Transverse colon (tissue), 4 donors: ENCODE measurements at regions of chrX and their contacts with region 1.

Region 1: DNA sequence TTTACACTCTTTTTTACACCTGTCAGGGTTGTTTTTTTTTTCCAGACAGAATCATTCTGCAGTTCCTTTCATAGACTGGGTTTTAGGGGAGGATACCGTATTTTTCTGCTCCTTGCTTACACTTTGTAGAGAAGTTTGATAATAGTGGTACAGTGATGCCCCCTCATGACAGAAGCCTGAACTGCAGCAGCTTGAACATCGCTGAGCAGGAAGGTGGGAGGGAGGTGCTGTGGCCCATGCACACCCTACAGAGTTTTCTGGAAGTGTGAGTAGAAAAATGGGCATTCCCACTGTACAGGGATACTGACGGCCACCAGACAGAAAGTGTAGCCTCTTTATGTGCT is 54.5 kb downstream of the RAB40A start:
- DNase-seq: peak; percentile 80
- H3K4me3 ChIP-seq: peak overlapping the region in 1 of 4 donors; percentile 27
- H3K27ac ChIP-seq: no peak overlapping the region
- H3K4me1 ChIP-seq: peaks cover 0 to 3% (median 0%) of the 10 kb centered on the region in 4 donors
- H3K27me3 ChIP-seq: no peaks in the 10 kb centered on the region
- CTCF ChIP-seq: peak; percentile 56 to 71 (median 69)
- EP300 ChIP-seq: no peak
- POLR2A ChIP-seq: no peak

Region 2: DNA sequence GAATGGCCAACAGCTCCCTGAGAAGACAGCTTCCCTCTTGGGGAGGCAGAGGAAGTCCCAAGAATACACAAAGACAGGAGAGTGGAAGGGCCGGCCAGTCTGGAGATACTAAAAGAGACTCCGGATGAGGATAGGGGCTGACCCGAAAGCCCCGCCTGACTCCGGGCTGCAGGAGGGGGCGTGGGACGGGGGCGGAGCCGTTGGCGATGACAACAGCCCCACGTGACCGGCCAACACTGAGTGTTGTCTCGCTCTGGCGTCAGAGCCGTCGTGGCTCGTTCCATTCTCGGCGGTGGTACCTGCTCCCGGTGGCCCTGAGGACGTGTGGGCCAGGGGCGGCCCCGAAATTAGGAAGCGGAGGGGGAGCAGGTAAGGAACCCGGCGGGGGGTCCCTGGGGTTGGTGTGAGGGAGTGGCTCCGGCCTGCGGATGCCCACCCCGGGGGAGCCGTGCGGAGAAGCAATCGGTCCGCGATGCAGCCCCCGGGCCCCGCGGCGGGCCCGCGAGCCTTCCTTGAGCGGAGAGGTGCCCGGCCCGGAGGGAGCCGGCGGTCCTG is 249.8 kb before region 1 on chrX and contains the start of gene BEX4:
- in situ Hi-C with region 1: loop called in 3 of 4 experiments (anchors 10 to 25 kb)
- intact Hi-C with region 1: no loop called
- DNase-seq: peak; percentile 88
- H3K4me3 ChIP-seq: peak within 1 kb of the TSS; percentile 68 to 87 (median 80)
- H3K27ac ChIP-seq: peak within 1 kb of the TSS; percentile 84 to 93 (median 90)
- H3K4me1 ChIP-seq: no peaks in the 10 kb centered on the region
- H3K27me3 ChIP-seq: no peaks in the 10 kb centered on the region
- CTCF ChIP-seq: no peak
- EP300 ChIP-seq: no peak
- POLR2A ChIP-seq: peak; percentile 81
- total RNA-seq, gene BEX4: 4.4 to 27.5 (median 16.2) TPM

Region 3: DNA sequence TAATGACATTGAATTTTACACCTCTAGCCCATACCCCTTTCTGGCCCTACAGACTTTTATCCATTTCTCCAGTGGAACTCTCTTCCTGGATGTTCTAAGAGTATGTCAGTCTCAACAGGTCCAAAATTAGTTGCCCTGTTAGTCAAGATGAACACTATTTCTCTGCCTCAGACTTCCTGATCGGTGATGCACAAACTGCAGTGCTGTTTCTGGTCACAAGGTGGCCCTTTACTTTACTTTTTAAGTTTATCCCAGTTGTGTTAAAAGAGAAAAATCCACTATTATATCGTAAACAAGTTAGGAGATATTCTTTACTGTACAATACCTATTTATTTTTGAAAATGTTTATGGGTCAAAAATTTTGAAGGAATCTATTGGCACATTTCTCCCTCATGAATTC is 121.6 kb before region 1 on chrX:
- in situ Hi-C with region 1: loop called in 2 of 4 experiments (anchors 10 to 25 kb)
- intact Hi-C with region 1: loop called (anchors 10 kb)
- DNase-seq: peak; percentile 52
- H3K4me3 ChIP-seq: no peak overlapping the region
- H3K27ac ChIP-seq: no peak overlapping the region
- H3K4me1 ChIP-seq: no peaks in the 10 kb centered on the region
- H3K27me3 ChIP-seq: no peaks in the 10 kb centered on the region
- CTCF ChIP-seq: peak; percentile 53 to 70 (median 59)
- EP300 ChIP-seq: no peak
- POLR2A ChIP-seq: no peak